HAP-1 (cell line): ENCODE measurements at regions of chr13 and their contacts with region 1.

Region 1: DNA sequence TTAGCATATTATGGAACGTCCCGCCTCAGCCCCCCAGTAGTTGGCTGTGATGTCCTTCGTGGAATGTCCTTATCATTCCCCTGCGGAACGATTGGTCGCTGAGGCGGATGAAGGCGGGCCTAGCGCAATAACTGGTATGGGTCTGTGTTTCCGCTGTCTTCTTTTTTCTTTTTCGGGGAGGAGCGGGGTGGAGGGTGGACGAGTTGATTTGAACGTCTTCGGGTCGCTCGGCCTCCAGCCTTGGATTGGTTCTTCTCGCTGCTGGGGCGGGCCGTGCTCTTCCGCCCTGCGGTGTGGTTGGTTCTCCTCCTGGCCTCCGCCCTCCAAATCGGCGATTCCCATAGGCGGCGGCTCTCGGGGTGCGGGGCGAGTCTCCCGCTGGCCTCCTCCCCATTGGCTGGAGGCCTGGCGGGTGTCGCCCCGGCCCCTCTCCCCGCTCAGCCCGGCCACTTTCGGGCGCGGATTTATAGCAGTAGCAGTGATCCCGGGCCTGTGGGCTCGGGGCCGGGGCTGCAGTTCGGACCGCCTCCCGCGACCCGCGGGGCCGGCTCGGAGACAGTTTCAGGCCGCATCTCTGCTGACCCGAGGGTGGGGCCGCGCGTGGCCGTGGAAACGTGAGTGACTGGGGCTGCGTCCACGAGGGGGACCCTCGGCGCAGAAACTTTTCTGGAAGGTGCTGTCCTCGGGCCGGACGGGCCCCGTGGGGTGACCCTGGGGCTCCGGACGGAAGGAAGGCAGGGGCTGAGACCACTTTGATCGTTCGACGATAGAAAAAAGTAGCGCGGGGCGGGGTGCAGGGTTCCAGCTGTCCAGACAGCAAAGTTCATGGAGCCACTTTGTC is 2.1 kb downstream of the ING1 start:
- DNase-seq: peak; percentile 97 to 98
- H3K4me3 ChIP-seq: peak overlapping the region; percentile 93
- H3K4me1 ChIP-seq: peaks cover 6% of the 10 kb centered on the region
- H3K27me3 ChIP-seq: no peaks in the 10 kb centered on the region

Region 2: DNA sequence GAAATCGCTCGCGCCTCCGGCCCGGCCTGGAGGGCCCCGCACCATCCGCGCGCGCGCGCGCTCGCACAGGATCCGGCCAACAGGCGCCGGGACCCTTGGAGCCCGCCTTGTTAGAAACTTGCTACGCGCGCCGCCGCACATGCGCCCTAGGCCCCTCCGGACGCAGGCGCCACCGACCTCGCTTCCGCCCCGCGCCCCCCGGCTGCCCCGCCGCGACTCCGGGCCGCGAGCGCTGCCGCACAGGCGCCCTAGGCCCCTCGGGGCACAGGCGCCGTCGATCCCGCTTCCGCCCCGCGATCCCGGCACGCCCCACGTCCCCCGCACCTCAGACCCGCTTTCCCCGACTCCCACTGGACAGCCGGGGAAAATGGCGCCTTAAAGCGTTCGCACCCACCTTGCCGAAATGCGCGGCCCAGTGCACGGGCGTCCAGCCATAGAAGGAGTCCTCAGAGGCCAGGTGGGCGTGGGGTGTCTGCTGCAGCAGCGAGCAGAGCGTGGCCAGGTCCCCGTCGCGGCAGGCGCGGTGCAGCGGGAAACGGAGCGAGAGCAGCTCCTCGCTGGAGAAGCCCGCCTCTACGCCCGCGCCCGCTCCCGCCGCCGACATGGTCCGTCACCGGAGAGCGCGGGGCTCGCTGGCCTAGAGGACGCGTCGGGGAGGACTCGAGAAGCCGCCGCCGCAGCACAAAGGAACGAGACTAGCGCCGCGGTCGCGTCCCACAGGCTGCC is 198.9 kb after region 1 on chr13:
- in situ Hi-C with region 1: loop called (anchors 5 kb)
- DNase-seq: peak; percentile 68 to 83
- H3K4me3 ChIP-seq: peak overlapping the region; percentile 100
- H3K4me1 ChIP-seq: peaks cover 20% of the 10 kb centered on the region
- H3K27me3 ChIP-seq: no peaks in the 10 kb centered on the region

Region 3: DNA sequence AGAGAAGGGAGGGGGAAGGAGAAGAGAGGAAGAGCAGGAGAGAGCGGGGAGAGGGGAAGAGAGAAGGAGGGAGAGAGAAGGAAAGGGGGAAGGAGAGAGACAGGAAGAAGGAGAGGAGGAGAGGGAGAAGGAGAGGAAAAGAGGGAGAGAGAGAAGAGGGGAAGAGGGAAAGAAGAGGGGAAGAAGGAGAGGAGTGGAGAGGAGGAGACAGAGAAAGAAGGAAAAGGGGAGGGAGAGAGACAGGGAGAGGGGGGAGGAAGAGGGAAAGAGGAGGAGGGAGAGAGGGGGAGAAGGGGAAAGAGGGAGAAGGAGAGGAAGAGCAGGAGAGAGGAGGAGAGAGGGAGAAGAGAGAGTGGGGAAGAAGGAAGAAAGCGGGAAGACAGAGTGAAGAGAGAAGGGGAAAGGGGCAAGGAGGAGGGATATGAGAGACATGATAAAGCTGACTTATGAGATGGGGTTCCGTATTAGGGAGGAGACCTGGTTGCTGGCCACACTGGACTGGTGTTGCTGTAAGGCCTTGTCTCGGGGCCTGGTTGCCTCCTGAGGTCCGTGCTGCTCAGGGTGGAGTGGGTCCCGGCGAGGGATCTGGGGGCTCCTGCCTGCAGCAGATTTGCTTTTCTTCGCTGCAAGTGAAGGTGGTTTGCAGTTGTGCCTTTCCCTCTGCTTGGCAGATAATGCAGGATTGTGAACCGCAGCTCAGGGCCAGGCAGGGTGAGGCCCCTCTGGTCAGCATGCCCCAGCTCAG is 744.4 kb after region 1 on chr13:
- in situ Hi-C with region 1: no loop called
- DNase-seq: no peak
- H3K4me3 ChIP-seq: no peak overlapping the region
- H3K4me1 ChIP-seq: no peaks in the 10 kb centered on the region
- H3K27me3 ChIP-seq: peaks cover 22% of the 10 kb centered on the region